Dorsolateral prefrontal cortex (tissue), 120 donors: ENCODE measurements at regions of chr12 and their contacts with region 1.

Region 1: DNA sequence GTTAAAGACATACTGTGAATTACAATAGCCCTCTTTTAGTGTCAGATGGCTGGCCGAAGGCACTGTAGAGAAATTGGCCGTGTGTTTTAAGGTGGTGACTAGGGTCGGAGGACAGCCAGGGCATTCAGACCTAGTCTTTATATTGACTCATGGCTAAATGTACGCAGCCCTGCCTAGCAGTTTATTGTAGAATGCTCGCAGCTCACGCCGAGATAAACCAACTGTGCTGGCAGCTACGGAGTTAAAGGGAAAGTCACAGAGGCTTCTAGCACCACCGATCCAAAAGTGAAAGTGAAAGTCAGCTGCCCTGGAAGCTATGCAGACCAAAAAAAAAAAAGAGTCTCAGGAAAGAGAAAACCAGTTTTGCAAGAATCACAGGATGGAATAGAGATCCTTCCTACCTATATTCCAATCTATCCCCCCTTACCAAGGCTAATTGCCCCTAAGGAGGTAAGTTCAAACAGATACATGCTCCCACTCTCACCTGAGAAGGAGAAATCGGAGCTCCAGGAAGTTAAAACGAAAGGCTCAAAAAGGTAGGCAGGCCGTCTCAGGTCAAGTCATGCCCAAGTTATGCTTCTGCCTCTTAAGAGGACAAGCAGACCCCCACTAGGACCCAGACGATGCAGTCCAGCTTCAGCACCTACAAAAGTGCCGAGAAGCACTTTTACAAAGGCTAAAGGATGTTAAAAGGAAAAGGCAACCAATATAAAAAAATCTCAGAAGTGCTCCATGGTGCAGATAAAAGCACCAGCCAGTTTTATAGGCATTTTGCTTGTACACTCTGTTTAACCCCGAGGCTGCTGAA is 24.8 kb downstream of the KLRK1 start:
- DNase-seq: peak in 7 of 10 donors; percentile 44 to 65 (median 54)
- H3K4me3 ChIP-seq: peak overlapping the region; percentile 55 to 89 (median 75)
- H3K27ac ChIP-seq: peak overlapping the region; percentile 86 to 100 (median 99)
- H3K27me3 ChIP-seq: no peaks in the 10 kb centered on the region
- CTCF ChIP-seq: peak in 1 of 56 donors; percentile 11

Region 2: GRCh38 chr12:10212201-10213131 is 152.6 kb before region 1 on chr12 and contains the start of gene GABARAPL1:
- intact Hi-C with region 1: loop called (anchors 10 kb)
- DNase-seq: peak; percentile 84 to 97 (median 94)
- H3K4me3 ChIP-seq: peak within 1 kb of the TSS; percentile 51 to 98 (median 86)
- H3K27ac ChIP-seq: peak within 1 kb of the TSS; percentile 87 to 100 (median 99)
- H3K27me3 ChIP-seq: no peaks in the 10 kb centered on the region
- CTCF ChIP-seq: peak in 22 of 56 donors; percentile 2 to 48 (median 16)
- total RNA-seq, gene GABARAPL1: 163 to 583 (median 420) TPM

Region 3: DNA sequence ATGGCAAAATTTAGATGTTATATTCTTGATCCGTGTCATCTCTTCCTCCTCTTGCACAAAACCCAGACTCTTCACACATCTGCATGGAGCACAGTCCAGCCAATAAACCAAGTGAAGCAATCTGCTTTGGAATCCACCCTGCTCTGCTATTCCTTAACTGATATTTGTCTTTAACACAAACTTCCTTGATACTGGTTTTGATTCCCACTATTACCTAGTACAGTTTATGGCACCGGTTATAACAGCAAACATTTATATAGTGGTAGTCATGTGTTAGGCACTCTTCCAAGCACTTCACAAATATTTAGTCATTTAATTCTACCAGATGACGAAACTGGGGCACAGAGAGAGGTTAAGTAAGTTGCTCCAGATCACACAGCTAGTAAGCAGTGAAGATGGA is 296.3 kb after region 1 on chr12:
- intact Hi-C with region 1: no loop called
- DNase-seq: no peak
- H3K4me3 ChIP-seq: no peak overlapping the region
- H3K27ac ChIP-seq: no peak overlapping the region
- H3K27me3 ChIP-seq: no peaks in the 10 kb centered on the region
- CTCF ChIP-seq: no peak